ENCODE measurements at regions of chr11 and their contacts with region 1.

Region 1: DNA sequence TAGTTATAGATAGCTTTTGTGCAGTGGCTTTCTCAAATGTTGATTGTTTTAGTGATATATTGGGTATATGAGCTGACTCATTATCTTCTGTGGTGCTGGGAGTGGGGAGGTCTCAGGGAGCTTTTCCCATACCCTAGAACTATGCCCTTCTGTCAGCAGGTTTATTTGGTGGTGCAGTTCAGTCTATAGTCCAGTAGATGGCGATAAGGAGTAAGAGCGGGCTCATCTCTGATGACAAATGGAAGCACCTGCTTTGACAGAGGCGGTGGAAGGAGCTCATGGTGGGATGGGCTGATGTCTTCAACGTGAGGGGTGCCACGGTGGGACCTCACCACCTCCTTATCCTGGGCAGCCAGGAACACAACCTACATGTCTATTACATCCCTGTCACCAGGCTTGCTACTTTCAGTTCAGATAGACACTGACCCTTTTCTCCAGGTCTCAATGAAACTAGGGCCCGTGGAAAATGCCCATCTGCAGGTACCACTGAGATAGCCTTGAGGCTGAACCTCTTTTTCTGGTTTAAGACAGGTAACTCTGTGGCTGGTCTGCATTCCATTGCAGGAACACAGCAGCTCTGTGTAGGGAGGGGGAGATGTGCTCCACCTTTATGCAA is 13.0 kb upstream of the OR6A2 start:
- DNase-seq: no peak
- H3K4me3 ChIP-seq: no peak overlapping the region
- H3K27ac ChIP-seq: no peak overlapping the region
- H3K27me3 ChIP-seq: no peaks in the 10 kb centered on the region
- CTCF ChIP-seq: peak; percentile 98

Region 2: GRCh38 chr11:6771926-6772893 is 40.3 kb before region 1 on chr11 and contains the start of gene OR2AG2:
- CTCF ChIA-PET with region 1: interaction called, 10 read pairs
- POLR2A ChIA-PET with region 1: no interaction called
- DNase-seq: no peak
- H3K4me3 ChIP-seq: no peak within 1 kb of the TSS
- H3K27ac ChIP-seq: no peak within 1 kb of the TSS
- H3K27me3 ChIP-seq: no peaks in the 10 kb centered on the region
- CTCF ChIP-seq: no peak
- polyA plus RNA-seq, gene OR2AG2: 0.11 and 0.19 TPM in 2 replicates

Region 3: GRCh38 chr11:6825231-6825744 is 12.8 kb after region 1 on chr11:
- CTCF ChIA-PET with region 1: interaction called, 25 read pairs
- POLR2A ChIA-PET with region 1: no interaction called
- DNase-seq: no peak
- H3K4me3 ChIP-seq: no peak overlapping the region
- H3K27ac ChIP-seq: no peak overlapping the region
- H3K27me3 ChIP-seq: no peaks in the 10 kb centered on the region
- CTCF ChIP-seq: no peak

Region 4: DNA sequence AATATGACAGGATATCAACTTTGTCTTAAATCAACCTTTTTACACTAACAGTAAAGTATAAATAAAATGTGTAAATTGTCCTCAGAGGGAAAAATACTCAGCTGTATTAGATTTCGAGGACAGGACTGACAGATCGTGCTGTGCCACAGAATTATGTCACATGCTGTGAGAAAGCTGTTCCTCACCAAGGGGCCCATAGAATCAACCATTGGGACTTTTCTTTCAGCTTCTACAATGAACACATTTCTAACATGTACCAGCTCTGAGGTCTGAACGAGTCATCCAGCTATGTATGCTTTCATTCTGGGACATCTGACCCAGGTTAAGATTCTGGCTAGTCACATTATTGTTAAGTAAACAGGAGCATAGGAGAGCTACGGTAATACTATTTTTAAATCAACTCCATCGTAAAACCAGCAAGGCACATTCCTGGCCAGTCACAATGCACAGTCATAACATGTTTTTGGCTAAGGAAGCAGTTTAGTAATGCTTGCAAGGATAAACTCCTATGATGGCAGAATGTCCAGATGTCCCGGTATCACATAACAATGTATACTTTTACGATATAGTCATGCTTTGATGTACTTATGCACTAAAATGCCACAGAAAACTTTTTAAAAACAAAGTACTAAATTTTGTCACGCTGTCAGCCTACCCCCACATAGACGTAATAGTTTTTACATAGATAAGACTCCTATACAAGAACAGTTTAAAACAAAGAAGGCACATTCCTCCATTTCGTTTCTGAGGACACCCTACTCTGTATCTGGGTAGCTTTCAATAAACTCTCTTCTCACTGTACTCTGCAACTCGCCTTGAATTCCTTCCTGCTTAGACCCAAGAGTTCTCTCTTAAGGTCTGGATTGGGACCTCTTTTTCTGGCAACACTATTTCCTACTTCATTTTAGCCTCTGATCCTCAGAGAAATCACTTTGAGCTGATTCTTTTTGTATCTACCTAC is 180.2 kb after region 1 on chr11:
- CTCF ChIA-PET with region 1: interaction called, 15 read pairs
- POLR2A ChIA-PET with region 1: no interaction called
- DNase-seq: peak; percentile 94
- H3K4me3 ChIP-seq: no peak overlapping the region; the same call in 1 of the 2 replicates
- H3K27ac ChIP-seq: peak overlapping the region; percentile 95
- H3K27me3 ChIP-seq: no peaks in the 10 kb centered on the region
- CTCF ChIP-seq: no peak

Region 5: DNA sequence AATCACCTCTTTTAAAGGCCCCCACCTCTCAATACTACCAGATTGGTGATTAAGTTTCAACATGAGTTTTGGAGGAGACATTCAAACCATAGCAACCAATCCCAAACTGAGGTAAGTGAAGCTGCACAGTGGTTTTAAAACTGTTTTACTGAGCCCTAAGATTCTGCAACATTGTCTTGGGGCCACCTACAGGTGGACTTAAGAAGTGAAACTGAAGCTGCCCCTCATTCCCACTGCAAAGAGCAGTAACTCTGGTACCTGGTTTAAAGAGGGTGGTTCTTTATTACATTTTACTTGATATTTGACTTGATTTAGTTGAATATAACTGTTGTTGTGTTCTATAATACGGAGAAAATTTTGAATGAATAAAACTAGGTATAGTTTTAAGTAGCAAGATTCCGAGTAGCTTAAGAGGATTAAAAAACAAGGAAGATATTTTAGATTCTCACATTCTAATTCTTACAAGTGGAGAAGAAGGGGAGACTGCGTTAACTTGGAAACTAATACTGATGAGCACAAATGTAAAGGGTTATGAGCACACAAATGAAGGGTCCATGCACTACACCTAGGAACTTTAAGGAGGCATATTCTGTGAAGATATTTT is 465.9 kb after region 1 on chr11:
- CTCF ChIA-PET with region 1: interaction called, 18 read pairs
- POLR2A ChIA-PET with region 1: no interaction called
- DNase-seq: no peak
- H3K4me3 ChIP-seq: no peak overlapping the region
- H3K27ac ChIP-seq: no peak overlapping the region
- H3K27me3 ChIP-seq: no peaks in the 10 kb centered on the region
- CTCF ChIP-seq: peak; percentile 72